ENCODE measurements at regions of chr2 and their contacts with region 1.

Region 1: GRCh38 chr2:55617175-55618024 is at the start of gene PPP4R3B:
- DNase-seq: peak; percentile 99
- H3K4me3 Mint-ChIP-seq: no peak within 1 kb of the TSS
- H3K27ac Mint-ChIP-seq: no peak within 1 kb of the TSS
- H3K4me1 Mint-ChIP-seq: peaks cover 46% of the 10 kb centered on the region
- H3K27me3 Mint-ChIP-seq: no peaks in the 10 kb centered on the region
- total RNA-seq, gene PPP4R3B: 70.7 to 75.4 TPM

Region 2: DNA sequence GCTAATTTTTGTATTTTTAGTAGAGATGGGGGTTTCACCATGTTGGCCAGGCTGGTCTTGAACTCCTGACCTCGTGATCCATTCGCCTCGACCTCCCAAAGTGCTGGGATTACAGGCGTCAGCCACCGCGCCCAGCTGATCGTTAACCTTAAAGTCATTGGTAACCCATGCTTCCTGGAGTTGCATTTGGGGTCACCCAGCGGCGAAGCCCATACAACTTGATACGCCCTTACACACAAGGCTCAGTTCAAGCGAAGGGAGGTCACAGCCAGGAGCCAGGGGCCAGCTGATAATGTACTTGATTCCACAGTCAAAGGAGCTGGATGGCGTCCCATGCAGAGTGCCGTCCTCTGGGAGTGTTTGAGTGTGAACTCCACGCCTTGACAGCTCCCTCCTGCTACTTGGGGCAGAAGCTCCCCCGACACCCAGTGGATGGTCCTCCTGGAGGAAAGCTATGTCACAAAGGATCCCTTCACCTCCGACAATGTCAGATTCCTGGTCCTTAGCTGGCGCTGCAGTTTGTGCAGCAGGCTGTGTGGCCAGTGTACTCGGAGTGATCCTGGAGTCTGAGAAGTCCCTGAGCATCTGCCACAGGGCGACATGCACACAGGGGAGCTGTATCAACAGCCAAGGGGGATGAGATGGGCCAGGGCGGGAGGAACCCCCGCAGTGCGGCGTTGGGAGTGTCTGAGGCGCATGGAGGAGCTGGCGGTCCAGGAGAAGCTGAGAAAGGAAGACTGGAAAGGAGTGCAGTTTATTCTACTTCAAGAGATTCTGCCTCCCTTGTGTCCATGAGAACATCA is 393.2 kb before region 1 on chr2:
- CTCF ChIA-PET with region 1: no interaction called
- POLR2A ChIA-PET with region 1: interaction called, 12 read pairs
- DNase-seq: no peak
- H3K4me3 Mint-ChIP-seq: peak overlapping the region; percentile 72
- H3K27ac Mint-ChIP-seq: peak overlapping the region; percentile 78
- H3K4me1 Mint-ChIP-seq: peaks cover 41% of the 10 kb centered on the region
- H3K27me3 Mint-ChIP-seq: no peaks in the 10 kb centered on the region

Region 3: GRCh38 chr2:55519938-55520885 is 97.2 kb before region 1 on chr2:
- CTCF ChIA-PET with region 1: interaction called, 5 read pairs
- POLR2A ChIA-PET with region 1: interaction called, 32 read pairs
- DNase-seq: peak; percentile 38
- H3K4me3 Mint-ChIP-seq: peak overlapping the region; percentile 97
- H3K27ac Mint-ChIP-seq: peak overlapping the region; percentile 94
- H3K4me1 Mint-ChIP-seq: peaks cover 14% of the 10 kb centered on the region
- H3K27me3 Mint-ChIP-seq: no peaks in the 10 kb centered on the region

Region 4: DNA sequence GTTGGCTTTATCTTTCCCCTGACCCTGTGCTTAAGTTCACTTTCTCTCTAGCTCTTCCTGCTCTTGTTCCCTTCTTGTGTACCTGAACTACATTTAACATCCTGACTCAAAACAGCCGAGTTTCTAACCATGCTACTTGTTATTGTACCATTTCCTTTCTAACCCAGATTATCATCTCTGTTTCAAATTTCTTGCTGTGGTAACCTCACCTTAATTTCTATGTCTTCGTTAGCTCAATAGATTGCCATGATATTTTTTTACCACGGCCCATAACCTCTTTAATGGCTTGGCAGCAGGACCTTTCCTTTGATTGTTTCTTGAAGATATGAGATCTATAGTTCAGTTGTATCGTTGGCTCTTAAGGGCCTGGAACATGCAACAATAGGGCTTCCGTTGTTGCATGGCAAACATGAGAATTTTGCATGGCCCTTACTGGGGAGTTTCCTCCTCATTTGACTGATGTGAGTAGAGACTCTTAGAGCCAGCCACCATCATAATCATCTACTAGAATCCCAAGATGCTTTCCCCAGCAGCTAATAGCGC is 86.8 kb before region 1 on chr2:
- CTCF ChIA-PET with region 1: no interaction called
- POLR2A ChIA-PET with region 1: interaction called, 14 read pairs
- DNase-seq: peak; percentile 20
- H3K4me3 Mint-ChIP-seq: peak overlapping the region; percentile 9
- H3K27ac Mint-ChIP-seq: peak overlapping the region; percentile 89
- H3K4me1 Mint-ChIP-seq: peaks cover 21% of the 10 kb centered on the region
- H3K27me3 Mint-ChIP-seq: no peaks in the 10 kb centered on the region

Region 5: GRCh38 chr2:55555977-55556376 is 61.4 kb before region 1 on chr2:
- CTCF ChIA-PET with region 1: no interaction called
- POLR2A ChIA-PET with region 1: no interaction called
- DNase-seq: no peak
- H3K4me3 Mint-ChIP-seq: no peak overlapping the region
- H3K27ac Mint-ChIP-seq: no peak overlapping the region
- H3K4me1 Mint-ChIP-seq: no peaks in the 10 kb centered on the region
- H3K27me3 Mint-ChIP-seq: no peaks in the 10 kb centered on the region

Region 6: GRCh38 chr2:55604027-55604565 is 13.3 kb before region 1 on chr2:
- CTCF ChIA-PET with region 1: interaction called, 3 read pairs
- POLR2A ChIA-PET with region 1: interaction called, 16 read pairs
- DNase-seq: no peak
- H3K4me3 Mint-ChIP-seq: no peak overlapping the region
- H3K27ac Mint-ChIP-seq: no peak overlapping the region
- H3K4me1 Mint-ChIP-seq: peaks cover 22% of the 10 kb centered on the region
- H3K27me3 Mint-ChIP-seq: no peaks in the 10 kb centered on the region

Region 7: GRCh38 chr2:55628931-55629330 is 11.5 kb after region 1 on chr2:
- CTCF ChIA-PET with region 1: no interaction called
- POLR2A ChIA-PET with region 1: interaction called, 12 read pairs
- DNase-seq: no peak
- H3K4me3 Mint-ChIP-seq: no peak overlapping the region
- H3K27ac Mint-ChIP-seq: no peak overlapping the region
- H3K4me1 Mint-ChIP-seq: peaks cover 2% of the 10 kb centered on the region
- H3K27me3 Mint-ChIP-seq: no peaks in the 10 kb centered on the region

Region 8: DNA sequence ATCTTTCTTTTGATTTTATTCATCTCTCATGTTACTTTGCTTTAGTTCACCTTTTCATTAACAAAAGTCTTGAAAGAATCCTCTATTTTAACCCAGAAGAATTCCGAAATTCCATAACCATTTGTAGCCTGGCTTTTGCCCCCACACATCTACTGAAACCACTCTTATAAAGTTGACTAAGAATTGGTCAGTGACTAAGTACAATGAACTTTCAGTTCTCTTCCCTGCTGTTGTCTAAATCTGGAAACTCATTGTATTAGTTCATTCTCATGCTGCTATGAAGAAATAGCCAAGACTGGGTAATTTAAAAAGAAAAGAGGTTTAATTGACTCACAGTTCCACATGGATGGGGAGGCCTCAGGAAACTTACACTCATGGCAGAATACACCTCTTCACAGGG is 126.2 kb after region 1 on chr2:
- CTCF ChIA-PET with region 1: no interaction called
- POLR2A ChIA-PET with region 1: no interaction called
- DNase-seq: no peak
- H3K4me3 Mint-ChIP-seq: no peak overlapping the region
- H3K27ac Mint-ChIP-seq: no peak overlapping the region
- H3K4me1 Mint-ChIP-seq: no peaks in the 10 kb centered on the region
- H3K27me3 Mint-ChIP-seq: peaks cover 2% of the 10 kb centered on the region